WTC11 (cell line): ENCODE measurements at regions of chr11 and their contacts with region 1.

Region 1: GRCh38 chr11:47355283-47356128 is 3.0 kb upstream of the MYBPC3 start:
- DNase-seq: peak; percentile 99
- ATAC-seq: peak; percentile 89
- H3K4me3 Mint-ChIP-seq: peak overlapping the region; percentile 66
- H3K27ac Mint-ChIP-seq: no peak overlapping the region
- H3K4me1 Mint-ChIP-seq: peaks cover 13% of the 10 kb centered on the region
- H3K27me3 Mint-ChIP-seq: no peaks in the 10 kb centered on the region
- CTCF ChIP-seq: peak; percentile 77

Region 2: DNA sequence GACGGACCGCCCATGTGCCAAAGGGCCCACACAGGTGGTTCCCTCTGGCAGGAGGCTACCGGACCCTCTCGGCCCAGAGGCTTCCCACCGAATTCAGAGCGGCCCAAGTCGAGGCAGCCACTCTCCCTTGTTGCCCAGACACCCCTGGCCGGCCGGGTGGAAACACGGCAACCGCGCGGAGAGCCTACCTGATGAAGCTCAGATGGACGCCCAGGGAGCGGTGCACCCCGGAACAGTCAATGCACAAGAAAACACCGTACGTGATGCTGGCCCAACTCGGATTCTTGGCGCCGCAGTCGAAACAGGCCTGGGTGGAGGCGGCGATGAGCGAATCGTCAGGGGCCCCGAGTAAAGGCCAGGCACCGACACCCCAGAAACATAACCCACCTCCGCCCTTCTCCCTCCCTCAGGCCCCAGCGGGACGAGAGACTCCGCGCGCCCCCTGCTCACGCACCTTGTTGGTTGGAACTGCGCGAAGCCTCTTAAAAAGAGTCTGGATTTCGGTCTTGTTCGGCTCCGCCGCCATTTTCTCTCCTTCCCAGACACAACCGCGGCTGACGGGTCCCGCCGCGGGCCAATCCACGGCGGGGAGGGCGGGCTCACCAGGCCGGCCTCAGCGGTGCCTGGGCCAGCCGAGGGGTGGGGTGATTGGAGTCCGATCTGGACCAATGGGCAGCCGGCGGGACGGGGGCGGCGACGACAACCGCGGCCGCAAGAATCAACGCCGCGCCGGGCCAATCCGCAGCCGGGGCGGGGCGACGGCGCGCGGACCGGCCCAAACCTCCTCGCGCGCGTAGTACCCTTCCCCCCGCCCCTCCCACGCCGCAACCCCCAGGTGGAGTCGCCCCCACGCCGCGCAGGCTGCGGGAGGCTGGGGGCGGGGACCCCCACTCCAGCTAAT is 178.9 kb before region 1 on chr11 and contains the start of gene ARFGAP2:
- CTCF ChIA-PET with region 1: interaction called, 29 read pairs
- POLR2A ChIA-PET with region 1: no interaction called
- DNase-seq: peak; percentile 95
- ATAC-seq: peak; percentile 94
- H3K4me3 Mint-ChIP-seq: peak within 1 kb of the TSS; percentile 88
- H3K27ac Mint-ChIP-seq: peak within 1 kb of the TSS; percentile 98
- H3K4me1 Mint-ChIP-seq: peaks cover 16% of the 10 kb centered on the region
- H3K27me3 Mint-ChIP-seq: no peaks in the 10 kb centered on the region
- CTCF ChIP-seq: no peak
- total RNA-seq, gene ARFGAP2: 55.7 to 73.0 TPM (median 60.5 TPM) in 3 replicates

Region 3: GRCh38 chr11:47213985-47214564 is 141.4 kb before region 1 on chr11:
- CTCF ChIA-PET with region 1: interaction called, 27 read pairs
- POLR2A ChIA-PET with region 1: no interaction called
- DNase-seq: peak; percentile 86
- ATAC-seq: peak; percentile 89
- H3K4me3 Mint-ChIP-seq: peak overlapping the region; percentile 97
- H3K27ac Mint-ChIP-seq: peak overlapping the region; percentile 100
- H3K4me1 Mint-ChIP-seq: peaks cover 29% of the 10 kb centered on the region
- H3K27me3 Mint-ChIP-seq: no peaks in the 10 kb centered on the region; the same call in 1 of the 2 replicates
- CTCF ChIP-seq: no peak

Region 4: DNA sequence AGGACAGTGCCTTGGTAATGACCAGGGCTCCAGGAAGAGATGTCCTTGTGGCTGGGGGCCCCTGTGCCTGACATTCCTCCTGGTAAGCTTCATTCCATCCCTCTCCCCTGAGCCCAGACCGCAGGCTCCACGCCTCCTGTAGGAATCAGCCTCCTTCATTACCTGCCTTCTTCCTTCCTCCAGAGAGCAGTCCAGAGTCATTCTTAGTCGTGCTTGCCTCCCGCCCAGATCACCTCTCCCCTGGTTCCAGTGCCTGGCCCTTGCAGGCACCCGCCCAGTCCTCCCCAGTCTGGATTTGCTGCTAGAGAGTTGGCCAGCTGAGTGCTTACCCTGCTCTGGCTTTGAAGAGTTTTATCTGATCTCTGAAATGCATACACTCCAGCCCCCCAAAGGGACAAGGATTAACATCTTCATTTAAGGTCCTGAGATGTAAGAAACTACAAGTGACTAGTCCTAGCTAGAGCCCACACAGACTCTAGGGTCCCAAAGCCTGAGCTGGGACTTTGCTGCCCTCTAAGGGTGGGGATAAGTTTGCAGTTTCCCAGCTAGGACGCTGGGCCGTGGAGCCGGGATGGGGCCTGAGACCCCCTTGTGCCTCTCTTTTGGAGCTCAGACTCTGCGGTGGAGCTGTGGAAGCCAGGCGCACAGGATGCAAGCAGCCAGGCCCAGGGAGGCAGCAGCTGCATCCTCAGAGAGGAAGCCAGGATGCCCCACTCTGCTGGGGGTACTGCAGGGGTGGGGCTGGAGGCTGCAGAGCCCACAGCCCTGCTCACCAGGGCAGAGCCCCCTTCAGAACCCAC is 96.1 kb before region 1 on chr11:
- CTCF ChIA-PET with region 1: interaction called, 67 read pairs
- POLR2A ChIA-PET with region 1: interaction called, 5 read pairs
- DNase-seq: peak; percentile 80
- ATAC-seq: peak; percentile 78
- H3K4me3 Mint-ChIP-seq: peak overlapping the region; percentile 16
- H3K27ac Mint-ChIP-seq: peak overlapping the region; percentile 78
- H3K4me1 Mint-ChIP-seq: peaks cover 24% of the 10 kb centered on the region
- H3K27me3 Mint-ChIP-seq: no peaks in the 10 kb centered on the region
- CTCF ChIP-seq: peak; percentile 38; the same call in 1 of the 2 replicates

Region 5: DNA sequence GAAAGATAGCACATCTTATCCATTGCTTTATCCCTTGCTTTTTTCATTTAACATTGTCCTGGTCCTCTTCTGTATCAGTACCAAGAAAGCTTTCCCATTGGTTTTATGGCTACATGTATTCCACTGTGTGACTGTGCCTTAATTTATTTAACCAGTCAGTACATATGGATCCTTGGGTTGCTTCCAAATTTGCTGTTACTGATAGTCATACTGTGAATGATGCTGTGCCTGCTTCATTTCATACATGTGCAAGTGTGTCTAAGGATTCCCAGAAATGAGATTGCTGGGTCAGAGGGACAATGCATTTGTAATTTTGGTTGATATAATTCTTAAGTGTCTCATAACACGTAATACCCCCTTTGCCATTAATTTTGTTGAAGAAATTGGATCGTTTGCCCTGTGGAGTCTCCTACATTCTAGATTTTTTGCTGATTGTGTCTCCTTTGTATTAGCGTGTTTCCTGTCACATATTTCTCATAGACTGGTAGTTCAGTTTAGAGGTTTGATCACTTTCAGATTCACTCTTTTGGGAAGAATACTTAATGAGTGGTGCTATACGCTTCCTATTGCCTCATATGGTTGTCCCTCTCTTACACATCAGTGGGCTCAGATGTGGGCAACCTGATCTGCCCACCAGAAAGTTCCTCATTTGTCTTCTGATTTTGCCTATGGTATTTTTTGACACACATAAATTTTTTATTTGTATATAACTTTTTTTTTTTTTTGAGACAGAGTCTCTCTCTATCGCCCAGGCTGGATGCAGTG is 38.3 kb before region 1 on chr11:
- CTCF ChIA-PET with region 1: interaction called, 14 read pairs
- POLR2A ChIA-PET with region 1: no interaction called
- DNase-seq: no peak
- ATAC-seq: no peak
- H3K4me3 Mint-ChIP-seq: no peak overlapping the region
- H3K27ac Mint-ChIP-seq: no peak overlapping the region
- H3K4me1 Mint-ChIP-seq: no peaks in the 10 kb centered on the region
- H3K27me3 Mint-ChIP-seq: no peaks in the 10 kb centered on the region
- CTCF ChIP-seq: no peak

Region 6: DNA sequence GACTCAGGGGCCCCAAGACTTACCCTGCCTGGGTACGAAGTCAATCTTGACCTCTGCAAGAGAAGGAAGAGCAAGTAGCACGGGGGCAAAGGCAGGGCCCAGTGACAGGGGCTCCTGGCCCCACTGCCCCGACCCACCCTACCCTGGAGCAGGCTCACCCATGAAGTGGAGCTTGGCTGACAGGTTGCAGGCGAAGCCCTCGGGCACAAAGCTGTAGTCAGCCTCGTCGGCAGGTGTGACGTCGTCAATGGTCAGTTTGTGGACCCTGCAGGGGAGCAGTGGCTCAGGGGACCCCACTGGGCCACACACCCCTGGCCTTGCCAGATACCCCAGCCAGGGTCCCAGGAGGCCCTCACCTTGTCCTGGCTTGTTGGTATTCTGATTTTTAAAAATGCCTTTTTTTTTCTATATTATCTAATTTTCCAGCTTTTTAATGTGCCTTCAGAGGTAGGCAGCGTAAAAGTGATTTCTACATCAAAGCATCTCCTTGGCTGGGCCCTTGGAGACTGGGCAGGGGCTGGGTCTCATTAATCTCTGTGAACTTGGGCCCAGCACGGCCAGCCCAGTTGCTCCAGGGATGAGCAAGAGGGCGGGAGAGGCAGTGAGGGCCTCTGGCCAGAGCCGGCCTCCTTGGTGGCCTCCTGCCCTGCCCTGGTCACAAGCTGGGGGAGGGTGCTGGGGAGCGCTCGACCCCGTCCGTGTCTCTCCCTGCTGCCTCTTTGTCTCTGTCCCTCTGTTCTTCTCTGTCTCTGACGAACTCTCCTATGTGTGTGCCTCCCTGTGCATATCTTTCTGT is 14.3 kb before region 1 on chr11:
- CTCF ChIA-PET with region 1: interaction called, 33 read pairs
- POLR2A ChIA-PET with region 1: interaction called, 3 read pairs
- DNase-seq: no peak
- ATAC-seq: no peak
- H3K4me3 Mint-ChIP-seq: no peak overlapping the region
- H3K27ac Mint-ChIP-seq: no peak overlapping the region
- H3K4me1 Mint-ChIP-seq: no peaks in the 10 kb centered on the region
- H3K27me3 Mint-ChIP-seq: no peaks in the 10 kb centered on the region
- CTCF ChIP-seq: no peak

Region 7: DNA sequence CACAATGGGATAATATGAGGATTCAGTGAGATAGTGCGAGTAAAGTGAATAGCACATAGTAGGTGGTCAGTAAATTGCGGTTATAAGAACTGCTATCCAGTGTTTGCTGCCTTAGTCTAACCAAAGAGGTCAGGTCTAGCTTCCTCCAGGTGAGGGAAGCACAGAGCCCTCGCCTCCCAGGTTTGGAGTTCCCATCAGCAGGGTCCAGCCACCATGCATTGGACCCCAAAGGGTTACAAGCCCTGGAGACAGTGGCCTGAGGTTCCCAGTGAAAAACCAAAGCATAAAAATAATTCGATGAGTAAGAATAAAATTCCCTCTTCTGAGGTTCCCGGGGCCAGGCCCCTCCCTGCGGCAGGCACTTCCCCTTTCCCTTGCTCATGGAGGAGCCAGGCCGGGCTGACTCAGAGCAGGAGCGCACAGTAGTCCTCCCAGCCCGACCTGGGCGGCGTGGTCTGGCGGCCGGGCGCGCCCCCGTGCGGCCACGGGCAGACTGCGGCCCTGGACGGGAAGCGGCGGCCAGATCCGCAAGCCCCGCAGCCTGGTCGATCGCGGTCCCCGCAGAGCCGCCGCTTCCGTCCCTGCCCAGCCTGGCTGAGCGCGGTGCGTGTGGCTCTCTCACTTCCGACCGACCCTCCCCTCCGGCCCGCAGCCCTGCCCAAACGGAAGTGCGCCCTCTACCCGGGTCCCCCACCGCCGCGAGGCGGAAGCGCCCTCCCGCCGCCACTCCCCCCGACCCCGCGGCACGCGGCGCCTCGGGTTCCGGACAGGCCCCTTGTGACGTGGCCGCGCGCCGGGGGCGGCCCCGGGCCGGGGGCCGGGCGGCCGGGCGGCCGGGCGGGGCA is 52.5 kb after region 1 on chr11 and contains the start of gene SLC39A13:
- CTCF ChIA-PET with region 1: interaction called, 13 read pairs
- POLR2A ChIA-PET with region 1: no interaction called
- DNase-seq: peak; percentile 94
- ATAC-seq: peak; percentile 88
- H3K4me3 Mint-ChIP-seq: peak within 1 kb of the TSS; percentile 95
- H3K27ac Mint-ChIP-seq: peak within 1 kb of the TSS; percentile 99
- H3K4me1 Mint-ChIP-seq: peaks cover 15% of the 10 kb centered on the region
- H3K27me3 Mint-ChIP-seq: no peaks in the 10 kb centered on the region
- CTCF ChIP-seq: peak; percentile 71
- total RNA-seq, gene SLC39A13: 32.8 to 38.2 TPM (median 35.1 TPM) in 3 replicates

Region 8: GRCh38 chr11:47477323-47477722 is 121.8 kb after region 1 on chr11:
- CTCF ChIA-PET with region 1: no interaction called
- POLR2A ChIA-PET with region 1: no interaction called
- DNase-seq: no peak
- ATAC-seq: no peak
- H3K4me3 Mint-ChIP-seq: no peak overlapping the region
- H3K27ac Mint-ChIP-seq: no peak overlapping the region
- H3K4me1 Mint-ChIP-seq: no peaks in the 10 kb centered on the region
- H3K27me3 Mint-ChIP-seq: no peaks in the 10 kb centered on the region
- CTCF ChIP-seq: no peak